Lower leg skin (tissue), 4 donors: ENCODE measurements at regions of chr11 and their contacts with region 1.

Region 1: GRCh38 chr11:68257475-68258362 is 14.1 kb downstream of the C11orf24 start:
- DNase-seq: peak; percentile 95 to 99
- H3K4me3 ChIP-seq: no peak overlapping the region
- CTCF ChIP-seq: peak in 1 of 3 donors; percentile 78
- POLR2A ChIP-seq: no peak

Region 2: GRCh38 chr11:67983951-67984350 is 273.8 kb before region 1 on chr11:
- intact Hi-C with region 1: no loop called
- DNase-seq: no peak
- H3K4me3 ChIP-seq: no peak overlapping the region
- CTCF ChIP-seq: no peak
- POLR2A ChIP-seq: no peak

Region 3: DNA sequence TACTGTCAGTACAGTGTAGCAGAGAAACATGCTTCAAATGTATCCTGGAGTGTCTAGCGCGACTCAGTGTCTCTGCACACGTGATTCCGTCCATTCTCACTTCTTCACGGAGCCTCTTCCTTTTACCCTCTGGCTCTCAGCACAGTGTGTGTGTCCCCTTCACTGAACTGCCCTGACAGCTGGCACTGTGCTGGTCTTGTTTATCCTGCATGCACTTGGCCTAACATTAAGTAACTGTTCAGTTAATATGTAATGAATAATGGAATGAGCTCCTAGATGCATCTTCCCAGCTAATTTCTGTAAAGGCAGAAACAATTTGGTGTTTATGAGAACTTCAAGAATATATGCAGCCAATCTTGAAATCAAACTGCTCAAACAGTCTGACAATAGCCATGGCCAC is 89.0 kb before region 1 on chr11:
- intact Hi-C with region 1: no loop called
- DNase-seq: no peak
- H3K4me3 ChIP-seq: no peak overlapping the region
- CTCF ChIP-seq: no peak
- POLR2A ChIP-seq: no peak

Region 4: DNA sequence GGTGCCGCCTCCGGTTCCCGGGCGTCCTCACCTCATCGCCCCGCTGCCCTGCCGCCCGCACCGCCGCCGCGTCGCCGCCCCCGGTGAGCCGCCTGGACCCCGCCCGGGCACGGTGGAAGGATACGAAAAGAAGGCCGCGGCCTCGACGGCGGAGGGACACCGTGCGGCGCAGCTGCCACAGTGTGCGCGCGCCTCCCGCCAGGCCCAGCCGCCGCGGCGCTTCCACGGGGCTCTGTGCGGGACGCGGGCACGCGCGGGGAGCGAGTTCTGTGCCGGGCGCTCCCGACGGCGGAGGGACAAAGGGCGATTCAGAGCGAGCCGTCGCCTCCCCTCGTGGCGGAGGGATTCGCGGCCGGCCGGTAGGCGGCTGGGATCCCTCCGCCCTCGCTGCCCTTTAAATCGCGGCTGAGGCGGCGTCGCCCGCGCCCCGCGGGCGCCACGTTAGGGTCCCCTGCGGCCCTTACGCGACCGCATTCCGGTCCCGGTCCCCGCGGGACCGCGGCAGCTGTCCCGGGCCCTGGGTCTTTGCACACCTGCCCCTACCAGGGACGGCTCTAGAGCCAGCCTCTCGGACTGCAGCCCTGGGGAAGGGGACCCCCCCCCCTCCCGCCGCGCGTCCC is 44.1 kb before region 1 on chr11:
- intact Hi-C with region 1: no loop called
- DNase-seq: peak; percentile 78 to 96
- H3K4me3 ChIP-seq: peak overlapping the region; percentile 73
- CTCF ChIP-seq: no peak
- POLR2A ChIP-seq: peak in 1 of 2 donors; percentile 85

Region 5: DNA sequence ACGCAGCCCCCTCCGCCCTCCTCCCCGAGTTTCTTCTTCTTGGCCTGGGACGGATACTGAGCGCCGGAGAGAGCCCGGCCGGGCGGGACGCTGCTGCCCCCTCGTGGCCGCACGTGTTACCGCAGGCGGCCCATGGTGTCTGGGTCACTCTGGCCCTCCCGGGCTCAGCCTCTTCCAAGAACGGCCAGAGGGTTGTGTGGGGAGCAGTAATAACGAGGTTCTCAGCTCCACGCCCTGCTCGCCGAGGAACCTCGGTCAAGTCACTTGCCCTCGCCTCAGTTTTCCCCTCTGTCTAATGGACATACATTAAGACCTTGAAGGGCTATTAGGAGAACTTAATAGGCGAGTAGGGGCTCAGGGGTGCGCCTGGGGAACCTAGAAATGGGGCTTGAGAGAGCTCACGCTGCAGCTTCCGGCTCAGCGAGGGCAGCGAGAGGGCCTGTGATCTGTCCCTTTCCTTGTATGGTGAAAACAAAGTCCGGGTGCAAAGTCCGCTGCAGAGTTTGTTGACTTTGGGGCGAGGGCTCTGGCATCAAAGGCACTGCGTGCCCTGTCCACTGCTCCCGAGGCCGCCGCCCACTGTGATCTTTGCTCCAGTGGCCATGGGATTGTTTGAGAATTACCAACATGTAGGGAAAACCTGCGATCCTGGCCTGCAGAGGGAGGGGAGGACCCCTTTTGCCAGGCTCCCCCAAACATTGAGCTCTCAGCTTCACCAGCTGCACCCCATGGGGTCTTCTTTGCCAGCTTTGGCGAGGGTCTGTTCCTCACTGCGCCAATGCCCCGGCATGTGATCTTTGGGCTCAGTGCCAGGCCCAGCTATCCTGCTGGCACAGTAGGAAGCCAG is 40.3 kb after region 1 on chr11:
- intact Hi-C with region 1: loop called (anchors 2 kb)
- DNase-seq: peak; percentile 61 to 95
- H3K4me3 ChIP-seq: no peak overlapping the region
- CTCF ChIP-seq: peak in 2 of 3 donors; percentile 74 to 84
- POLR2A ChIP-seq: no peak

Region 6: GRCh38 chr11:68383976-68384501 is 126.3 kb after region 1 on chr11:
- intact Hi-C with region 1: loop called (anchors 2 kb)
- DNase-seq: peak; percentile 55 to 92
- H3K4me3 ChIP-seq: no peak overlapping the region
- CTCF ChIP-seq: peak in 1 of 3 donors; percentile 72
- POLR2A ChIP-seq: no peak